Activated CD8-positive, alpha-beta T cell treated with anti-CD3 and anti-CD28 coated beads for 36 hours (primary cell): ENCODE measurements at regions of chr11 and their contacts with region 1.

Region 1: GRCh38 chr11:18012863-18013781 is at the start of gene SERGEF:
- DNase-seq: peak; percentile 94
- ATAC-seq: peak; percentile 94
- H3K4me3 Mint-ChIP-seq: peak within 1 kb of the TSS; percentile 92
- H3K27ac Mint-ChIP-seq: peak within 1 kb of the TSS; percentile 99
- H3K4me1 Mint-ChIP-seq: peaks cover 41% of the 10 kb centered on the region
- H3K27me3 Mint-ChIP-seq: no peaks in the 10 kb centered on the region
- CTCF ChIP-seq: no peak
- total RNA-seq, gene SERGEF: 56.2 to 64.4 TPM

Region 2: DNA sequence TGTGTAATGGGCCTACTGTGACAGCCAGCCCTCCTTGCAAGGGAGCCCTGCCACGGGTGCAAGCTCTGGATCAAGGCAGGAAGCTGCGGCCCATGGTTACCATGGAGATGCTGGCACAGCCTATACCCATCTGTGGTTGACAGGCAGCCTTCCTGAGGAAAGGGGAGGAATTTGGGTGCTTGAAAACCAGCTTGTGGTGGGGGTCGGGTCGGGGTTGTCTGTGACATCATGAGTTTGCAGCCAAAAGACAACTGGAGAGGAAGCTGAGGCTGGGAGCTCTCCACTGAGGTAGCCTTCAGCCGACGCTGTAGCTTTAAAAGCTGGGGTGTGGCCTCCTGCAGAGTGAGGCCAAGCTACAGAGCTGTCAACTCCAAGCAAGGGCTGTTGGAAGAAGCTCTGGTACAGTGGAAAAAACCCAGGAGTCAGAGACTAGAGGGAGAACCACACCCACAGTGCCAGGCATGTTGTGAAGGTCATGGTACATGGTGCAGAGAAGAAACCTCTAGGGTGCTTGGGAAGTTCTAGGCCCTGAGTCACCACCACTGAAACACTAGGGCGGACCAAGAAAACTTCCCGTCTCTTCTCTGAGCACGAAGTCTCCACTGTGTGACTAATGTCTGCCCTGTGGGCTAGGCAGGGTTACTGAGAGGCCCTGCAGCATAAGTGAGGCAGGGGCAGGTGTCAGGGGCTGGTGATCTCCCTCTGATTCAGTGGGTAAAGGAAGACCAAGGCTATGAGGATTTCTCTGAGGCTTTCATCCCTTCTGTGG is 370.4 kb after region 1 on chr11:
- CTCF ChIA-PET with region 1: no interaction called
- POLR2A ChIA-PET with region 1: no interaction called
- intact Hi-C with region 1: loop called (anchors 10 kb)
- DNase-seq: peak; percentile 92
- ATAC-seq: peak; percentile 95
- H3K4me3 Mint-ChIP-seq: peak overlapping the region; percentile 66
- H3K27ac Mint-ChIP-seq: peak overlapping the region; percentile 100
- H3K4me1 Mint-ChIP-seq: peaks cover 36% of the 10 kb centered on the region
- H3K27me3 Mint-ChIP-seq: no peaks in the 10 kb centered on the region
- CTCF ChIP-seq: no peak